ENCODE measurements at regions of chr5 and their contacts with region 1.

Region 1: GRCh38 chr5:178626484-178627258 is at the start of gene CLK4:
- DNase-seq: peak; percentile 77 to 98
- H3K4me3 ChIP-seq: peak within 1 kb of the TSS; percentile 88 to 91
- H3K27ac ChIP-seq: peak within 1 kb of the TSS; percentile 96 to 97
- H3K4me1 ChIP-seq: peaks cover 0 to 16% of the 10 kb centered on the region in 2 donors
- H3K27me3 ChIP-seq: no peaks in the 10 kb centered on the region
- CTCF ChIP-seq: no peak
- total RNA-seq, gene CLK4: 17.6 TPM

Region 2: GRCh38 chr5:178153573-178154343 is 472.9 kb before region 1 on chr5 and contains the start of gene NHP2:
- intact Hi-C with region 1: loop called (anchors 10 kb)
- DNase-seq: peak; percentile 92 to 99
- H3K4me3 ChIP-seq: peak within 1 kb of the TSS; percentile 63 to 77
- H3K27ac ChIP-seq: peak within 1 kb of the TSS; percentile 72 to 74
- H3K4me1 ChIP-seq: peaks cover 7 to 14% of the 10 kb centered on the region in 2 donors
- H3K27me3 ChIP-seq: no peaks in the 10 kb centered on the region
- CTCF ChIP-seq: no peak
- total RNA-seq, gene NHP2: 55.1 TPM

Region 3: DNA sequence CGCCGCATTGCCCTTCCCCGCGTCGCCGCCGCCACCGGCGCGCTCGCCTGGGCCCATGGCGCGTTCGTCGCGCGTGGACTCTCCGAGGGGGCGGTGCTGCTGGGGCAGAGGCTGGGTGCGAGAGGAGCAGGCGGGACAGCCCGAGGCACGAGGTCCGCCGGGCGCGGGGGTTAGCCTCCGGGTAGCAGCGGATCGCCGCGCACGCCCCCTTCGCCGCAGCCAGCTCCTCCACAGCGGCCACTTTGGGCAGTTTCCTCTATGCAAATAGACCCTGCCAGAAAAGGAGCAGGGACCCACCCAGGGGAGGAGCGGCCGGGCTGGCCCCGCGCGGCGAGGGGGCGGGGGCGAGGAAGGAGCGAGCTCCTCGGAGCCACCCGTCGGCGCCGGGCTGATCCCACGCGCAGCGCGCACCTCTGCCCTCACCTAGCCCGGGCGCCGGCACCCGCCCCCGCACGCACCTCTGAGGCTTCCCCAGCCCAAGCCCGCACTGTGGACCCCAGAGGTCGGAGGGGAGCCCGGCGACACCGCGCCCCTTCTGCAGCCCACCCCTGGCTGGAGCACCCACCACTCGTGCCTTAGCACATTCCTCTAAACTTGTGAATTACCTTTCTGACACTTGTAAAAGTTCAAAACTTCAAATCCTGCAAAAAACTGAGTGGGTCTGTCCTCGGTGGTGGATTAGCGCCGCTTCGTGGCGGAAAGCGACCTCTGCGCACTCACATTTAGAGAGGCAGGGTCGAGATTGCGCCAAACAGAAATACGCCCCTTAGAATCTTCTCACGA is 36.3 kb before region 1 on chr5 and contains the start of gene COL23A1:
- intact Hi-C with region 1: loop called (anchors 2 kb)
- DNase-seq: peak in 1 of 2 donors; percentile 83
- H3K4me3 ChIP-seq: peak within 1 kb of the TSS; percentile 62 to 67
- H3K27ac ChIP-seq: peak within 1 kb of the TSS; percentile 64 to 66
- H3K4me1 ChIP-seq: peaks cover 7 to 16% of the 10 kb centered on the region in 2 donors
- H3K27me3 ChIP-seq: no peaks in the 10 kb centered on the region
- CTCF ChIP-seq: peak; percentile 36 to 74 (median 47)
- total RNA-seq, gene COL23A1: 4.3 TPM

Region 4: DNA sequence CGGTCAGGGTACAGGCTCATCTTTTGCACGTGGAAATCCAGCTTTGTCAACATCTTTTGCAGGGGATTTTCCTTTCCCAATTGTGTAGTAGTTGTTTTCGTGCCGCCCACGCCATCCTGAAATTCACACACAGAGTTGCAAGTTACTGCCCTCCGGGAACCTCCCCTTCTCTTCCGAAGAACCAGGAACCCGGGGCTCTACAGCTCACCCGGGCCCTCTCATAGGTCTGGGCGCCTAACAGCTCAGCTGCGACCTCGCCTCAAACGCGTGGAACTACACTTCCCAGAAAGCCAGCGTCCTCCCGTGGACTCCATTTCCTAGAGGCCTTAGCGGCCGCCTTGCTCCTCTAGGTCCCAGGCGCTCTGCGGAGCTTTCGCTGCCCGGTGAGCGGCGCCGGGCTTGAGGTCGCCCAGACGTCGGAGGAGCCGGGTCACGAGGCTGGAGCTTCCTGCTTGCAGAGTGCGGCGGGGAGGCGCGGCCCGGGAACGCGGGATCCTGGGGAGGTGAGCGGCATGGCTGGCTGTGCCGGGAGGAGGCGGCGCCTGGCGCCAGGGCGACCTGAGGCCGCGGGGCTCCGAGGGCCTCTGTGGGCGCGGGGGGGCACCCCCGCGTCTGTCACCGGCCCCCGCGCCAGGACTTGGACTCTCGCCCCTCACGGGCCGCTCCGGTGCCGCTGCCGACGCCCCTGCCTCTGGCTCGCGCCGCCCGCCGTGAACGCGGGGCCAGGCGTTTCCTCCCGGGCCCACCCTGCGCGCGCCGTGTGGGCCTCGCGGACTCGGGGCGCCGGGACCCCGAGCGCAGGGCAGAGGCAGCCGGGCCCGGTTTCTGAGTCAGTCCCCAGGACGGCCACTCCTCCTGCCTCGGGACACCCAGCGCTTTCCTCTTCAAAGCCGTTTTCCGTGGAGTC is 233.2 kb after region 1 on chr5 and contains the start of gene ZNF354B:
- intact Hi-C with region 1: loop called (anchors 5 kb)
- DNase-seq: peak; percentile 77 to 95
- H3K4me3 ChIP-seq: peak within 1 kb of the TSS; percentile 89 to 93
- H3K27ac ChIP-seq: peak within 1 kb of the TSS; percentile 59 to 82
- H3K4me1 ChIP-seq: no peaks in the 10 kb centered on the region
- H3K27me3 ChIP-seq: no peaks in the 10 kb centered on the region
- CTCF ChIP-seq: peak in 1 of 3 experiments; percentile 17
- total RNA-seq, gene ZNF354B: 8.3 TPM

Region 5: DNA sequence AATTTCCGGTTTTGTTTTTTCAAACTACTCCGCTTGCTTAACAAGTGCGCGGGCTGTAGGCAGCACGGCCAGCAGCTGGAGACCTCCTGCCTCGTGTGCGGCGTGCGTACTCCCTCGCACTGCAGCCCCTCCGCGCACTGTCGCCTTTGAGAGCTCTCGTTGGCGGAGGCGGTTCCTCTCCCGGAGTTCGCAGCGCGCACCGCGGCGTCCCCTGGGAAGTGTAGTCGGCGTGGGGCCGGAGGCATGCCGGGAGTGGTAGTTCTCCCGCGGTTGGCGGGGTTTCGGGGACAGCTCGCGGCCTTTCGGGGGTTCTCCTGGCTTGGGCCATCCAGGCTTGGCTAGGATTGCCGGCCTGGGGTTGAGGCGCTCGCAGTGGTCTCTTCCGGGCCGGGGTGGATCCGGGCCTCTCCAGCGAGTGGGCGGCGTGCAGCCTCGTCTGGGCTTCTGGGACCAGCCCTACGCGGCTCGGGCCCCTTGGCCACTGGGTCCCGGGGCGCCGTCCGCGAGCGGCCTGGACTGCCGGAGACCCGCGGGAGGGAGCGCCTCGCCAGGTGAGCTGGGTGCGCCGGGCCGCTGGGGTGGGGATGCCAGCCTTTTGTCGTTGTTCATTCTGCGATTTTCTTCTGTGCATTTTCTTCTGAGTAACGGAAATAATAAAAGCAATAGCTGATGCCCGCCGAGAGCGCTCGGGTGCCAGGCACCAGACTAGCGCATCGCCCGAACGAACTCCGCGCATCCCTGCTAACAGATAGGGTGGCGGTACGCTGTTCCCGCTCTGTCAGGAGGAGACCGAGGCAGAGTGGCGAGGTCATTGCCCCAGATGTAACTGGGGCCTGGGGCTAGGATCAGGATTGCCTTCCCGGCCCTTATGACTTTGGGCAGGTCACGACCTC is 433.7 kb after region 1 on chr5 and contains the start of gene ZNF354C:
- intact Hi-C with region 1: loop called (anchors 5 kb)
- DNase-seq: peak; percentile 29 to 93
- H3K4me3 ChIP-seq: peak within 1 kb of the TSS; percentile 73 to 92
- H3K27ac ChIP-seq: peak within 1 kb of the TSS; percentile 65 to 71
- H3K4me1 ChIP-seq: peaks cover 0 to 3% of the 10 kb centered on the region in 2 donors
- H3K27me3 ChIP-seq: no peaks in the 10 kb centered on the region
- CTCF ChIP-seq: no peak
- total RNA-seq, gene ZNF354C: 3.0 TPM

Region 6: DNA sequence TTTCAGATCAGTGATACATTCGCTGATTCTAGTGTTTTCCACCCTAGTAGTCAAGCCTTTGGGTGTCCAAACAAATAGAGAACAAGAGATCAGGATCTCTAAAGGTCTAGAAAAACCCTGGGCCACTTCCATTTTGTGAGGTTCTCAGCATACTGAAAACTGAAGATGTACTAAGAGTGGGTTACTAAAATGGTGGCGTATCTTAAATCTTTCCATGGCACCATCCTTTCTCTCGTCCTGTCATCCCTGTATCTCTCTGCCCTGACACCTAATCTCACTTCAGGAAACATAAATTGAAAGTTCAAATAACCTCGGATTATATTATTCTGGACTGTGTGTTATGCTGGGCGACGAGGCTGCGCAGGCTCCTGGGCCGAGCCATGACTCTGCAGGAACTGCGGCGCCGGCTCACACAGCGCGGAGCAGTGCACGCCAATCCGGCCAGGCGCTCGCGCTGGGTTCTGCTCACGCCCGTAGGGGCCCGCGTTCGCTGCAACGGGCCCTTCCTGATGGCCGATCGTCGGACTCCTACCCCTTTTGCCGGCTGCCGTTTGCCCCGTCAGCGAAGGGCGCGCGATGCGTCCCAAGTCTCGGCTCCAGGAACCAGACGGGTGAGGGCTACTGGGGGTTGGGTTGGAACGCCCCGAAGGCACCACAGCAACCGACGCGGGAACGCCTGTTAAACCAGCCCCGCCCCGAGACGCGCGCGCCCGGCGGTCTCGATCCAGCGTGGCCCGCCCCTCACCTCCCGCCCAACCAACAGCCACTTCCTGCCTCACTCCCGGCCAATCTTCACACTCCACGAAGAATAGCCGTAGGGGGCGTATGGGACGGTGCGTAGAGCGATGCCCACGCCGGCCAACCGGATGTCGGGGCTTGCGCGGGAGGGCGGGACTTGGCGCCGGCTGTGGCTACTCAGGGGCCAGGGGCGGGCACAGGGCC is 1071.6 kb after region 1 on chr5:
- intact Hi-C with region 1: loop called (anchors 2 kb)
- DNase-seq: peak; percentile 98 to 100
- H3K4me3 ChIP-seq: peak overlapping the region; percentile 90 to 94
- H3K27ac ChIP-seq: peak overlapping the region; percentile 98 to 99
- H3K4me1 ChIP-seq: peaks cover 0 to 11% of the 10 kb centered on the region in 2 donors
- H3K27me3 ChIP-seq: no peaks in the 10 kb centered on the region
- CTCF ChIP-seq: no peak

Measured in ascending aorta (tissue), 2 donors.